IMR-90 (cell line): ENCODE measurements at regions of chr5 and their contacts with region 1.

Region 1: DNA sequence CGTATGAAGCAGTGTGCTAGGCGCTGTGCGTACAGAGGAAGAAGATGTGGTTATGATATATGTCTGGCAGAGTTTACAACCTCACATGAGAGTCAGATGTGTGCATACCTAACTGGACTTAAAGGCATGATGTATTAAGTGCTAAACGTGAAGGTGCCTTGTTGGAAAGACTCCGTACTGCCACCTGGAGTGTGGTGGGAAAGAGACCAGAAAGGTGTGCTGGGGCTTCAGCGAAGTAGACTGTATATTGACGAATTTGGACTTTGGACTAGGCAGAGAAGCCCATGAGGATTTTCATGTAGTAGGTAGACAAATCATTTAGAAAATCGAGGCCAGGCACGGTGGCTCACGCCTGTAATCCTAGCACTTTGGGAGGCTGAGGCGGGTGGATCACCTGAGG is 24.9 kb upstream of the DHFR start:
- DNase-seq: no peak
- ATAC-seq: no peak
- H3K4me3 ChIP-seq: no peak overlapping the region
- H3K27ac ChIP-seq: no peak overlapping the region
- H3K4me1 ChIP-seq: peaks cover 2% of the 10 kb centered on the region; the same call in 1 of the 2 replicates
- H3K27me3 ChIP-seq: no peaks in the 10 kb centered on the region
- CTCF ChIP-seq: no peak
- POLR2A ChIP-seq: no peak
- RAD21 ChIP-seq: no peak

Region 2: DNA sequence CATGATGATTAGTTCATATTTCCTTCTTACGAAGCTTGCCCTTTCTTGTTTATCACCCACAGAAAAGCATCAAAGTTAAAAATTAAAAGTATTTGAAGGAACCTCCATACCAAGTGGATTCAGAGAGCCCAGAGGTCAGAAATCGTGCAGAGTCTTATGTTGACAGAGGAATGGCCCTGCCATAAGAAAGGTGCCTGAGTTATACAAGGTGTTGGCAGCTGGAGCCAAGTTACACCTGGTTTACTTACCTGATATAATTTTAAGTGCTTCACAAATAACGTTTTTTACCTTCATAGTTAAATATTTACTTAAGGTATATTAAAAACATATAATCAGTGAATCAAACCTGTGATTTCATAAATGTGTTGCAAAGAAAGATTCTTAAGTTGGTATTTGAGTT is 17.4 kb after region 1 on chr5:
- CTCF ChIA-PET with region 1: no interaction called
- POLR2A ChIA-PET with region 1: interaction called, 11 read pairs
- dilution Hi-C with region 1: no loop called
- in situ Hi-C with region 1: no loop called
- intact Hi-C with region 1: no loop called
- DNase-seq: no peak
- ATAC-seq: no peak
- H3K4me3 ChIP-seq: no peak overlapping the region
- H3K27ac ChIP-seq: no peak overlapping the region
- H3K4me1 ChIP-seq: no peaks in the 10 kb centered on the region
- H3K27me3 ChIP-seq: no peaks in the 10 kb centered on the region
- CTCF ChIP-seq: no peak
- POLR2A ChIP-seq: no peak
- RAD21 ChIP-seq: no peak